Posterior vena cava (tissue), 2 donors: ENCODE measurements at regions of chr15 and their contacts with region 1.

Region 1: GRCh38 chr15:65244638-65245037 is 33.4 kb upstream of the CILP start:
- DNase-seq: no peak

Region 2: GRCh38 chr15:65177901-65178300 is 66.7 kb before region 1 on chr15:
- intact Hi-C with region 1: no loop called
- DNase-seq: no peak

Region 3: GRCh38 chr15:65192016-65192415 is 52.6 kb before region 1 on chr15:
- intact Hi-C with region 1: loop called in 1 of 2 experiments (anchors 5 kb)
- DNase-seq: peak; percentile 40

Region 4: GRCh38 chr15:65264863-65265430 is 20.3 kb after region 1 on chr15:
- intact Hi-C with region 1: no loop called
- DNase-seq: peak; percentile 13